Caco-2 (cell line): ENCODE measurements at regions of chr16 and their contacts with region 1.

Region 1: GRCh38 chr16:89700100-89700648 is 1.3 kb downstream of the SPATA2L start:
- DNase-seq: peak; percentile 100
- H3K4me3 ChIP-seq: peak overlapping the region; percentile 87
- H3K4me3 Mint-ChIP-seq: peak overlapping the region; percentile 83
- H3K27ac Mint-ChIP-seq: peak overlapping the region; percentile 77
- H3K4me1 ChIP-seq: peaks cover 4% of the 10 kb centered on the region; the same call in 1 of the 2 replicates
- H3K4me1 Mint-ChIP-seq: peaks cover 7% of the 10 kb centered on the region
- H3K27me3 ChIP-seq: no peaks in the 10 kb centered on the region
- H3K27me3 Mint-ChIP-seq: no peaks in the 10 kb centered on the region
- CTCF ChIP-seq: peak; percentile 88 to 89

Region 2: DNA sequence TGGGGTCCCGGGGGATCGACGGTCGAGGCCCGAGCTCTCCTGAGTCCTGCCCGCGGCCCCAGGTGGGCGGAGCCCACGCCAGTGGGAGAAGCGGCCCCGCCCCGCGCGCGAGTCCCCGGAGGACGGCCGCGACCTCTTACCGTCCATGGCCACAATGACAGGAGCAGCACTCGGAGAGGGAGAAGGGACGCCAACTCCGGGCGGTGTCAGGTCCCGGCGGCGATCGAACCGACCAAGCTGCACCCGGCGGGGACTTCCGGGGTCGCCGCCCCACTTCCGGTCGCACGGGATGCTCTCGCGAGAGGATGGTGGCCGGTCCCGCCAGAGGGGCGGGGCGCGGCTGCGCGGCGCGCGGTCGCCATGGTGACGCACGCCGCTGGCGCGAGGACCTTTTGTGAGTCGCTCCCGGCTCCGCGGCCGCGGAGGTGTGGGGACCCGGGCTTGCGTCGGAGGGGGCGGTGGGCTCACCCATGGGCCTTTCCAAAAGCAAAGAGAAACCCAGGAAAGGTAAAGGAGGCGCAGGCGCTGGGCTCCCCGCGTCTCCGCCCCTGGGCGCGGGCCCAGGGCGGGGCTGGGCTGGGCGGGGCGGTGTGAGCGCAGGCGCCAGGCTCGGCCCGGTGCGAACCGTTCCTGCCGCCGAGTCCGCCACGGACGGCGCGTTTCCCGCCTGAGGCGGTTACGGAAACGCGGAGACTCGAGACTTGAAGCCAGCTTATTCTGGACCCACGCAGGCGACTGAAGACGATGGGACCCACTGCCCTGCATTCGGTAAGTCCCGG is 42.5 kb before region 1 on chr16 and contains the starts of genes CHMP1A and SPATA33:
- CTCF ChIA-PET with region 1: interaction called, 5 read pairs
- POLR2A ChIA-PET with region 1: no interaction called
- intact Hi-C with region 1: loop called (anchors 5 kb)
- DNase-seq: peak; percentile 93 to 97
- H3K4me3 ChIP-seq: peak within 1 kb of the TSS; percentile 99
- H3K4me3 Mint-ChIP-seq: peak within 1 kb of the TSS; percentile 95
- H3K27ac Mint-ChIP-seq: peak within 1 kb of the TSS; percentile 94
- H3K4me1 ChIP-seq: no peaks in the 10 kb centered on the region
- H3K4me1 Mint-ChIP-seq: peaks cover 8% of the 10 kb centered on the region
- H3K27me3 ChIP-seq: no peaks in the 10 kb centered on the region
- H3K27me3 Mint-ChIP-seq: no peaks in the 10 kb centered on the region
- CTCF ChIP-seq: no peak
- total RNA-seq, gene CHMP1A: 150 and 159 TPM in 2 replicates
- total RNA-seq, gene SPATA33: 19.7 and 29.1 TPM in 2 replicates

Region 3: DNA sequence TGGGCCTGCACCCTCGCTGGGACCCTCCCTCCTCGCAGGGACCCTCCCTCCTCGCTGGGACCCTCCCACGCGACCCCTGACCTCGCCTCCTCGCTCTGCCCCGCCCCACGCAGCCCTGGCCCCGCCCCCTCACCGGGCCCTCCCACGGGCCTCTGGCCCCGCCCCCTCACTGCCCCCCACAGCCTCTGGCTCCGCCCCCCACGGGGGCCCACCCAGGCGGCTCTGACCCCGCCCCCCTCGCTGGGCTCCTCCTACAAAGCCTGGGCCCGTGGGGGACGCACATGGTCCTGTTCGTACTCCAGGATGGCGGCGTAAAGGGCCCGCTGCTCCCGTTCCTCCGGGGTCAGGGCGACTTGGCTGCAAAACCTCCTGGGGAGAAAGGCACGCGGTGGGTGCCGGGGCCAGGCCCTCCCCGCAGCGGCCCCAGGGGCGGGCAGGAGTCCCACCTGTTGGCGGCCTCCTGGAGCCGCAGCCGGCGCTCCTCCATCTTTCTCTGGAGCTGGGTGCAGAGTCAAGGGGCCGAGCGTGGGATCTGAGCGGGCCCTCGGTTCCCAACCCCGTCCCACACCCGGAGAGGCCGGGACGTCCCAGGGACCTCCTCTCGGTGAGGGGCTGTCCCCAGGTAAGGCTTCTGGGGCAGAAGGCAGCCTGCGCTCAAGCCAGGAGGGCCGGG is 11.6 kb after region 1 on chr16:
- CTCF ChIA-PET with region 1: interaction called, 15 read pairs
- POLR2A ChIA-PET with region 1: interaction called, 5 read pairs
- intact Hi-C with region 1: loop called (anchors 1 kb)
- DNase-seq: peak; percentile 82 to 85
- H3K4me3 ChIP-seq: peak overlapping the region; percentile 50
- H3K4me3 Mint-ChIP-seq: peak overlapping the region; percentile 82
- H3K27ac Mint-ChIP-seq: peak overlapping the region; percentile 69
- H3K4me1 ChIP-seq: peaks cover 6% of the 10 kb centered on the region; the same call in 1 of the 2 replicates
- H3K4me1 Mint-ChIP-seq: no peaks in the 10 kb centered on the region
- H3K27me3 ChIP-seq: no peaks in the 10 kb centered on the region
- H3K27me3 Mint-ChIP-seq: no peaks in the 10 kb centered on the region
- CTCF ChIP-seq: peak in 1 of 2 experiments; percentile 16

Region 4: DNA sequence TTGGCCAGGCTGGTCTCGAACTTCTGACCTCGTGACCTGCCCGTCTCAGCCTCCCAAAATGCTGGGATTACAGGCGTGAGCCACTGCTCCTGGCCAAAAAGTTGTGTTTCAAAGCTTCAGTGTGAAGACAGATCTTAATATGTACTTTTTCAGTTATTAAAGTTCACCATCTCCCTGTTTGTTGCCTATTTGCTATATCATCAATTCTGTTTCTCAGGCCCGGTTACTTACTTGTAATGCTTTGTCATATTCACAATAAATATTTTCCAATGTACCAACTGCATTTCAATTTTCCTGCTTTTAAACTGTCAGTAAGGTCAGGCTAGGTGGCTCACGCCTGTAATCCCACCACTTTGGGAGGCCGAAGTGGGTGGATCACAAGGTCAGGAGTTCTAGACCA is 93.8 kb after region 1 on chr16:
- CTCF ChIA-PET with region 1: interaction called, 6 read pairs
- POLR2A ChIA-PET with region 1: no interaction called
- intact Hi-C with region 1: loop called (anchors 1 kb)
- DNase-seq: no peak
- H3K4me3 ChIP-seq: no peak overlapping the region
- H3K4me3 Mint-ChIP-seq: no peak overlapping the region
- H3K27ac Mint-ChIP-seq: no peak overlapping the region
- H3K4me1 ChIP-seq: no peaks in the 10 kb centered on the region
- H3K4me1 Mint-ChIP-seq: no peaks in the 10 kb centered on the region
- H3K27me3 ChIP-seq: no peaks in the 10 kb centered on the region
- H3K27me3 Mint-ChIP-seq: no peaks in the 10 kb centered on the region
- CTCF ChIP-seq: no peak

Region 5: DNA sequence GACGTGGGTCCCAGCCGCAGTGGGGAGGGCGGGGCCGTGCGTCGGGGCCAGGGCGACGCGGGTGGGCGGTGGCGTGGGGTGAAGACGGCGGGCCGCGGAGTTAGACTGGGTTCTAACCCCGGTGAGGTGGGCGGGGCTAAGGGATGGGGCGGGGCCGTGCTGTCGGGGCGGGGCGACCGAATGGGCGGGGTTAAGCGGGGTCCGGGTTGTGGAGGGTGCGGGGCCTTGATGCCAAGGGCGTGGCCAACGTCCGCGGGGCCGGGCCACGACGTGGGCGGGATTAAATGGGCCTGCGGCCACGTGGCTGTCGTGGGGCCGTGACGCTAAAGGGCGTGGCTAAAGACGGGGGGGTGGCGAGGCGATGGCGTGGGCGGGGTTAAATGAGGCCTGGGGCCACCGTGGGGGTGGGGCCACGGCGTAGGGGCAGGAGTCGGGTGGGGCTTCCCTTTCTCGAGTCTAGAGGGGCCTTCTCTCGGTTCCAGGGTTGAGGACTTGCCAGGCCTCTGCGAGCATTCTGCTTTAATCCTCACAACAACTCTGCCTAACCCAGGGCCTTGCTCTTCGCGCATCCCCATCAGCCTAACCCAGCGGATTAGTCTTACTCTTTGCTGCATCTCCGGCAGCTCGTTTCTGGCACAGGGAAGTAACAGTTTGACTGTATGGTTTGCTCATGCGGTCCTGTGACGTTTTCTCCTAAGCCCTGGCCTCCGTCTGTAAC is 174.0 kb after region 1 on chr16:
- CTCF ChIA-PET with region 1: interaction called, 16 read pairs
- POLR2A ChIA-PET with region 1: interaction called, 11 read pairs
- intact Hi-C with region 1: no loop called
- DNase-seq: peak; percentile 95 to 98
- H3K4me3 ChIP-seq: peak overlapping the region; percentile 100
- H3K4me3 Mint-ChIP-seq: peak overlapping the region; percentile 87
- H3K27ac Mint-ChIP-seq: peak overlapping the region; percentile 94
- H3K4me1 ChIP-seq: peaks cover 11% of the 10 kb centered on the region
- H3K4me1 Mint-ChIP-seq: peaks cover 7% of the 10 kb centered on the region
- H3K27me3 ChIP-seq: no peaks in the 10 kb centered on the region
- H3K27me3 Mint-ChIP-seq: no peaks in the 10 kb centered on the region
- CTCF ChIP-seq: no peak